Activated CD8-positive, alpha-beta memory T cell treated with anti-CD3 and anti-CD28 coated beads, Interleukin-2, amount 10 ng/mL, durations not matched to agents 7 days and 5 days (primary cell): ENCODE measurements at regions of chr11 and their contacts with region 1.

Region 1: GRCh38 chr11:82867495-82868082 is 32.6 kb downstream of the PRCP start:
- DNase-seq: peak; percentile 82
- ATAC-seq: peak; percentile 61
- H3K4me3 Mint-ChIP-seq: no peak overlapping the region
- H3K27ac Mint-ChIP-seq: peak overlapping the region; percentile 13
- H3K4me1 Mint-ChIP-seq: peaks cover 10% of the 10 kb centered on the region
- H3K27me3 Mint-ChIP-seq: peaks cover 2% of the 10 kb centered on the region

Region 2: GRCh38 chr11:82718307-82718706 is 149.3 kb before region 1 on chr11:
- CTCF ChIA-PET with region 1: interaction called, 13 read pairs
- DNase-seq: no peak
- ATAC-seq: no peak
- H3K4me3 Mint-ChIP-seq: no peak overlapping the region
- H3K27ac Mint-ChIP-seq: no peak overlapping the region
- H3K4me1 Mint-ChIP-seq: no peaks in the 10 kb centered on the region
- H3K27me3 Mint-ChIP-seq: peaks cover 13% of the 10 kb centered on the region

Region 3: DNA sequence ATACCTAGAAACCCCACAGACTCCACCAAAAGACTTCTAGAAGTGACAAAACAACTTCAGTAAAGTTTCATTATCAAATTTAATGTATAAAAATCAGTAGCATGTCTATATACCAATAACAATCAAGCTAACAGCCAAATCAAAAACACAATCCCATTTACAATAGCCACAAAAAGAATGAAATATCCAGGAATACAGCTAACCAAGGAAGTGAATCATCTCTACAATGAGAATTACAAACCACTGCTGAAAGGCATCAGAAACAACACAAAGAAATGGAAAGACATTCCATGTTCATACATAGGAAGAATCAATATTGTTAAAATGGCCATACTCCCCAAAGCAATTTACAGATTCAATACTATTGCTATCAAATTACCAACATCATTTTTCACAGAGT is 13.3 kb before region 1 on chr11:
- CTCF ChIA-PET with region 1: interaction called, 32 read pairs
- DNase-seq: no peak
- ATAC-seq: no peak
- H3K4me3 Mint-ChIP-seq: no peak overlapping the region
- H3K27ac Mint-ChIP-seq: no peak overlapping the region
- H3K4me1 Mint-ChIP-seq: peaks cover 8% of the 10 kb centered on the region
- H3K27me3 Mint-ChIP-seq: no peaks in the 10 kb centered on the region

Region 4: GRCh38 chr11:82889133-82890001 is 21.8 kb after region 1 on chr11:
- CTCF ChIA-PET with region 1: interaction called, 16 read pairs
- DNase-seq: no peak
- ATAC-seq: no peak
- H3K4me3 Mint-ChIP-seq: no peak overlapping the region
- H3K27ac Mint-ChIP-seq: no peak overlapping the region
- H3K4me1 Mint-ChIP-seq: no peaks in the 10 kb centered on the region
- H3K27me3 Mint-ChIP-seq: no peaks in the 10 kb centered on the region

Region 5: DNA sequence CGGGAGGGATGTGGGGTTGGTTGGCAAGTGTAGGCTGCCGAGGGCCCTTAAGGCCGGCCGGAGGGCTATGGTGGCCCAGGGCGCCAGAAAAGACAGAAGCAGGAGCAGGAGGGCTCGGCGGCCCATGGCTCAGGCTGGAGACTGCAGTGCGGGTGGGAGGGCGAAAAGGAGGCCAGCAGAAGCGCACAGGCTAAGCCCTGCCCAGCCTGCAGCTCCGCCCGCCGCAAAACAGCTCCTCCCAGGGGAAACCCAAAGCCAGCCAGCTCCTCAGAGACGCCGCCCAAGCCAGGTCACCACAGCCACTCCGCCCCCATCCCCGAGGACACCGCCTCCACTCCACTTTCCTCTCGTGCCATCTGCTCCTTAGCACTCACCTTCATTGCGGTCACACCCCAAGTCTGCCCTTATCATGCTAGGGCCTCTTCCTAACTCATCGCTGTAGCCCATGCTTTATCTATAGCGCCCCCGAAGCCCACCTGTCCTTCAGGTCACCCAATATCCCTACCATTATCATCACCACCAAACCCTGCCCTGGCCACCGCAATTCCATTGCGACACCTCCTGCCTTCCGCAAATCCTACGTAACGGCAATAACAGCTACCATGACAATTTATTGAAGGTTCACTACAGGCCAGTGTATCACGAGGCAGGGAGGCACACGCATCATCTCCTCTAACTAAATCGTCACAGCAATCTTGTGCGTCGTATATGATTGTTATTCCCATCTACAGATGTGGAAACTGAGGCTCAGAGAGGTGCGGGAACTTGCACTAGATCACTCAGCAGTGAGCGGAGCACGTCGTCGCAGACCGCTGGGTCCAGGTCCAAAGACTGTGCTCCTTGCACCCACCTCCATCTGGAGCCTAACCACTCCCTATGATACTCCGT is 32.9 kb after region 1 on chr11 and contains the start of gene PRCP:
- CTCF ChIA-PET with region 1: interaction called, 43 read pairs
- DNase-seq: peak; percentile 97
- ATAC-seq: peak; percentile 81
- H3K4me3 Mint-ChIP-seq: peak within 1 kb of the TSS; percentile 91
- H3K27ac Mint-ChIP-seq: peak within 1 kb of the TSS; percentile 99
- H3K4me1 Mint-ChIP-seq: peaks cover 53% of the 10 kb centered on the region
- H3K27me3 Mint-ChIP-seq: no peaks in the 10 kb centered on the region
- total RNA-seq, gene PRCP: 17.3 to 21.8 TPM

Region 6: GRCh38 chr11:82949352-82949751 is 81.8 kb after region 1 on chr11:
- CTCF ChIA-PET with region 1: no interaction called
- DNase-seq: no peak
- ATAC-seq: no peak
- H3K4me3 Mint-ChIP-seq: no peak overlapping the region
- H3K27ac Mint-ChIP-seq: no peak overlapping the region
- H3K4me1 Mint-ChIP-seq: no peaks in the 10 kb centered on the region
- H3K27me3 Mint-ChIP-seq: no peaks in the 10 kb centered on the region

Region 7: GRCh38 chr11:83249972-83250593 is 382.5 kb after region 1 on chr11:
- CTCF ChIA-PET with region 1: interaction called, 26 read pairs
- DNase-seq: no peak
- ATAC-seq: peak; percentile 79
- H3K4me3 Mint-ChIP-seq: no peak overlapping the region
- H3K27ac Mint-ChIP-seq: no peak overlapping the region
- H3K4me1 Mint-ChIP-seq: peaks cover 10% of the 10 kb centered on the region
- H3K27me3 Mint-ChIP-seq: no peaks in the 10 kb centered on the region